Testis (tissue), 5 donors: ENCODE measurements at regions of chr9 and their contacts with region 1.

Region 1: DNA sequence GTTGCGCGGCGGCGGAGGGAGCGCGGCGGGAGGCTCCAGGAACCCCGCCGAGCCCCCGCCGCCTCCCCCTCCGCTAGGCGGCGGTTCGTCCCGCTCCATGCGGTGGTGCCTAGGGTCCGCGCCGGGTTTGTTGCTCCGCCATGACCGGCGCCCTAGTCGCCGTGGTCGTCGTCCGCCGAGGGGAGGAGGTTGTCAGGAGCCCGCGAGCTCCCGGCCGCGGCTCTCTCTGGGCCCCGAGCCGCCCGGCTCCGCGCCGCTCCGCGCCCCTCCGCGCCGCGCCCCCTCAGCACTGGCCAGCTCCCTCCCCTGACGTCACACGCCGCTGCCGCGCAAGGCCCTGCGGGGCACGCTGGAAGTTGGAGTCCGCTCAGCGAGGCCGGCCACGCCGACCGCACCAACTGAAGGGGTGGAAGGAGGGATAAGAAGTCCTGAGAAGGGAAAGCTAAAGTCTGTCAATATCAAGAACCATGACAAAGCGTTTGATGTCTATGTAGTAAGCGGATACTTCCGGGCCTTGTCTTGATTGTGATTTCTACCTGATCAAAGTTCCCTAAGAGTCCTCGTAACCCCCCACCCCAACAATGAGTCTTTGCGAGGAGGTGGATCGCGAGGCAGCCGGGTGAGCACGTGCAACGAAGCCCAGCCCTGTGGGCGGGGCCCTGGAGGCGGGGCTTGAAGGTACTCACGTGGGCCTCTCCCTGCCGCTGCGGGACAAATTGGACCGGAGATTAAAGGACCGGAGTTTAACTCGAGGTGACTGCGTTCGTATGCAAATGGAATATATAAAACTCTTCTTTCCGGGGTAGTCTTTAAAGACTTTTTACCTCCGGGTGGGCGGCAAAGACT is at the start of gene NR6A1:
- DNase-seq: peak; percentile 98
- H3K4me3 ChIP-seq: peak within 1 kb of the TSS; percentile 88 to 97
- H3K27ac ChIP-seq: peak within 1 kb of the TSS; percentile 88 to 96
- H3K4me1 ChIP-seq: peaks cover 15% of the 10 kb centered on the region
- H3K27me3 ChIP-seq: no peaks in the 10 kb centered on the region
- CTCF ChIP-seq: peak in 2 of 3 experiments; percentile 11 to 13
- POLR2A ChIP-seq: peak; percentile 72
- total RNA-seq, gene NR6A1: 92.1 to 100 TPM

Region 2: DNA sequence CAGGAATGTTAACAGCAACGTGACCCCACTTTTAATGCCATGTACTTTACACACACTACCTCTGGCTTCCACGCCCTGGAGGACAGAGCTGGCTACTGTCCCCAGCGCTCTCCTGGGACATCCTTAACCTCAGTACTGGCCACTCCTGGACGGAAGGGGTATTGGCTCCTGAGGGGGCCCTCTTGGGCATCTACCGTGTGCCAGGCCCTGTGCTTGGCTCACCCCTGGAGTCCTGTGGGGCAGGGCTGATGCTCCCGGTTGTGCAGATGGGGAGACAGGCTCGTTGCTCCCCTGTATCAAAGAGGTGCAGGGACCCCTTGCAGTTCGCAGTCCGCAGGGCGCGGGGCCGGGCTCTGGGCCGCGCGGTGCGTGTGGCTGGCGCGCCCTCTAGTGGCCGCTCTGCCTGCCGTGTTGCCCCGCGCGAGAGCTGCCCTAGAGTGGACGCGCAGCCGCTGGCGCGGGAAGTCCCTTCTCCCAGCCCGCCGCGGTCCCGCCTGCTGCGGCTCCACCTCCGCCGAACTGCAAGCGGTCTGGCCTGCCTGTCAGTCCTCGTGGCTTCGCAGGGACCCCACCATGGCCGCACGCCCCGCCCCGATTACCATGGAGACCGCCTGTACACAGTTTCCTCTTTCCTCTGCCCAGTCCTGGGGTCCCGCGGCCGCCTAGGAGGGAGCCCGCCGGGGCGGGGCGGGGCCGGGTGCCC is 81.7 kb after region 1 on chr9 and contains the start of gene WDR38:
- intact Hi-C with region 1: loop called (anchors 2 kb)
- DNase-seq: peak; percentile 81
- H3K4me3 ChIP-seq: peak within 1 kb of the TSS; percentile 52 to 60
- H3K27ac ChIP-seq: peak within 1 kb of the TSS in 1 of 2 donors; percentile 59
- H3K4me1 ChIP-seq: peaks cover 11% of the 10 kb centered on the region
- H3K27me3 ChIP-seq: no peaks in the 10 kb centered on the region
- CTCF ChIP-seq: peak; percentile 96 to 99 (median 98)
- POLR2A ChIP-seq: no peak
- total RNA-seq, gene WDR38: 3.2 to 7.6 TPM

Region 3: GRCh38 chr9:125143375-125144090 is 372.3 kb after region 1 on chr9 and contains the start of gene SCAI:
- intact Hi-C with region 1: loop called (anchors 10 kb)
- DNase-seq: peak; percentile 100
- H3K4me3 ChIP-seq: peak within 1 kb of the TSS; percentile 84 to 86
- H3K27ac ChIP-seq: peak within 1 kb of the TSS; percentile 72 to 73
- H3K4me1 ChIP-seq: no peaks in the 10 kb centered on the region
- H3K27me3 ChIP-seq: no peaks in the 10 kb centered on the region
- CTCF ChIP-seq: peak; percentile 99 to 100 (median 99)
- POLR2A ChIP-seq: no peak
- total RNA-seq, gene SCAI: 12.8 to 14.5 TPM

Region 4: GRCh38 chr9:125484350-125485282 is 713.4 kb after region 1 on chr9:
- intact Hi-C with region 1: no loop called
- DNase-seq: peak; percentile 27
- H3K4me3 ChIP-seq: no peak overlapping the region
- H3K27ac ChIP-seq: no peak overlapping the region
- H3K4me1 ChIP-seq: peaks cover 7% of the 10 kb centered on the region
- H3K27me3 ChIP-seq: no peaks in the 10 kb centered on the region
- CTCF ChIP-seq: no peak
- POLR2A ChIP-seq: no peak